BJ (cell line): ENCODE measurements at regions of chr2 and their contacts with region 1.

Region 1: DNA sequence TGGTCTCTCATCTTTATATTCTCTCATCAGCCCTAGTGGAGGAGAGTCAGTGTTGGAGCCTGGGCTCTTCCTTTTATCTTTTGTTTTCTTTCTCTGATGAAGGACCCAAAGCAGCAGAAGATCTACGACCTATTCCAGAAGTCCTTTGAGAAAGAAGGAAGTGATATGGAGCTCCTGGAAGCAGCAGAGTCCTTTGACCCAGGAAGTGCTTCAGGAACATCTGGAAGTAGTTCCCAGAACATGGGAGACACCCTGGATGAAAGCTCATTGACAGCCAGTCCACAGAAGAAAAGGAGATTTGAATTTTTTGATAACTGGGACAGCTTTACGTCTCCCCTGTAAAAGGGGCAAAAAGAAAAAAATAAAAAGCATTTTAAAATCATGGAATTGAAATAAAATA is 16.0 kb upstream of the RPL37A start:
- DNase-seq: no peak
- H3K4me3 ChIP-seq: no peak overlapping the region
- H3K27me3 ChIP-seq: no peaks in the 10 kb centered on the region
- CTCF ChIP-seq: no peak

Region 2: DNA sequence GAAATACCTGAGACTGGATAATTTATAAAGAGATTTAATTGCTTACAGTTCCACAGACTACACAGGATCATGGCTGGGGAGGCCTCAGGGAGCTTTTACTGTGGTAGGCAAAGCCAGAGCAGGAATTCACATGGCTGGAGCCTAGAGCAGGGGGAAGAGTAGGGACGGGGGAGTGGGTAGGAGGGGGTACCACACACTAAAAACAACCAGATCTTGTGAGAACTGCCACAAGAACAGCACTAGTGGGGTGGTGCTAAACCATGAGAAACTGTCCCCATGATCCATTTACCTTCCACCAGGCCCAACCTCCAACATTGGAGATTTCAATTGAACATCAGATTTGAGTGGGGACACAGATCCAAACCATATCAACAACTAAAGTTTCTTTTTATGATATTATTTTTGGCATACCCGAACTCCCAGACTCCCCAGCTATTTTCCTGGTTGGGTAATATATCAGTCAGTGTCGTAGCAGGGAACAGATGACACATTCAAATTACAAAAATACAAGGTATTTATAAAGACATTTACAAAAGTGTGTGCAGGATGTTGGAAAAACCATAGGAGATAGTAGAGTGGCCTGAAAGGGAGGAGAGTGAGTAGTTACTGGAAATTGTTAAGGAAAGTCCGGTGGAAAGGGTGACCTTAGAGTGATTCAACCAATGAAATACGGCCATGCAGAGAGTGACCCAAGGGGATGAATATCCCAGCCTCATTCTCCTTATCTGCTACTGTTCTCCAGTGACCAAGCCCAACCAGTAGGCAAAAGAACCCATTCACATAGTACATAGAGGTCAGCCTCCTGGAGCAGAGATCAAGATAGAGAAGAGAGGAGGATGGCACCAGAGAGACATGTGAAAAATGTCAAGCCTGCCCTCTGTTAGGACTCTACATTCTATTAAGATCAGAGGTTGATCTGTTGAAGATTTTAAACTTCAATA is 24.9 kb after region 1 on chr2:
- CTCF ChIA-PET with region 1: no interaction called
- POLR2A ChIA-PET with region 1: interaction called, 21 read pairs
- DNase-seq: no peak
- H3K4me3 ChIP-seq: no peak overlapping the region
- H3K27me3 ChIP-seq: no peaks in the 10 kb centered on the region
- CTCF ChIP-seq: no peak

Region 3: DNA sequence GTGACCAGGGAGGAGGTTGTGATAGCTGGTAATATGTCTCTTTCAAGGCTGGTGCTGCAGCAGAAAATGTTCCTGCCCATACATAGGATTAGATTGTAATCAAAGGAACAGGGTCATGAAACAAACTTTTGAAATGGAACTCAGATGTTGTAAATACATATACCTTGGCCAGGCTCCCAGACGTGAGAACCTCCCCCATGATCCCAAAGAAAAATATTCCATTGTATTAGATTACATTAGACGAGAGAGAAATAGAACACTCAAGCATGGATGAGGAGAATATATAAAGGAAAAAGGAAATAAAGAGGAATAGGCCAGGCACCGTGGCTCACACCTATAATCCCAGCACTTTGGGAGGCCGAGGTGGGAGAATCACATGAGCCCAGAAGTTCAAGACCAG is 68.6 kb after region 1 on chr2:
- CTCF ChIA-PET with region 1: no interaction called
- POLR2A ChIA-PET with region 1: no interaction called
- DNase-seq: no peak
- H3K4me3 ChIP-seq: no peak overlapping the region
- H3K27me3 ChIP-seq: no peaks in the 10 kb centered on the region
- CTCF ChIP-seq: no peak

Region 4: DNA sequence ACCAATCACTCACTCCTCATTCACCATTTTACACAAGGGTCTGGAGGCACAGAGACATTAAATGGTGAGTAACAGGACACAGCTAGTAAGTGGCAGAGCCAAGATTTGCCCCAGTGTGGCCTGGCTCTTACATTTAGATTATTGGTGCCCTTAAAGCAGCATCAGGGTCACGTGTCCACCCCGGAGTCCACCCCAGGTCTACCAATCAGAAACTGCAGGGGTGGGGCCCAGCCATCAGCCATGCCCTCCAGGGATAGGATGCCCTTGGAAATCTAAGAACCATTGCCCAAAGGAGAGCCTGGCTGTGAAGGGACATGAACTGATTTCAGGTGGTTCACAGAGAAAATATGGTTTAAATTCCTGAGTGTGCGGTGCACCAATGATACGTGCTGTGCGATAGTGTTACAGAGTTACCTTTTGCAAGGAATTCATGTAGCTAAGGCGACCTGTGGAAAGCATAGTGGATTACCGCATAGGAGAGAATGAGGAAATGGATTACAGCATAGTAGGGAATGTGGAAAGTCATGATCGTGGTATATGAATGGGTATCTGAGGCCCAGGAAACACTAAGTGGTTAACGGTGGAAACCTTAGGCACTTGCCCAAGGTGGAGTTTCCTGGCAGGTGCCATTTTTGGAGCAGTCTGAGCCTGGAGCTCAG is 194.9 kb after region 1 on chr2:
- CTCF ChIA-PET with region 1: no interaction called
- POLR2A ChIA-PET with region 1: no interaction called
- DNase-seq: no peak
- H3K4me3 ChIP-seq: no peak overlapping the region
- H3K27me3 ChIP-seq: no peaks in the 10 kb centered on the region
- CTCF ChIP-seq: no peak